Posterior vena cava (tissue), 2 donors: ENCODE measurements at regions of chr3 and their contacts with region 1.

Region 1: DNA sequence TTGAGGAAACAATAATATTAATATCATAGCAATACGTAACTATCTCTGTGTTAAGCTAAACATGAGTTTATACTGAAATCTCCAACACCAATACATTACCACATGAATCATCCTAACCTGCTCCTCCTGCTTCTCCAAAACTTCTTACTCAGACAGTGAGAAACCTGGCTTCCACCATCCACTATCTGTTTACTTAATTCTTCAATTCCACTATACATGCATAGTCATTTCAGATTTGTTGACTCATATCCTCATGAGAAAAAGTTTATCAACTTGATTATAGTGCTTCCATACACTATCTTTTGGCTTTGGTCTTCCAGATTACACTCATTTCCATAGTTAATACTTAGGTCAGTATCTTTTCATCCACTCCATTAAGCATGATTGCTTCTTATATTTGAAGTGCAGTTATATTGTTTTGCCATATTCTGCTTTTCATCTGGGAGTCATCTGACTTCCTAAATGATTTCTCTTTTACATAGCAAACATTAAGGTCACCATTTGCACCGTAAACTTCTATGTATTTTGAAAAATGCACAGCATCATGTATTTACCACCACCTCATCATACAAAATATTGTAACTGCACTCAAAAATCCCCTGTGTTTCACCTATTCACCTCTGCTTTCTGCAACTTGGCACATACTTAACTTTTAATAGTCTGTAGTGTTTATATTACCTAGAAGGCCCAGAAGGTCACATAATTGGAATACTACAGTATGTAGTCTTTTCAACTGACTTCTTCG is 970.6 kb downstream of the DIPK2A start:
- DNase-seq: no peak

Region 2: DNA sequence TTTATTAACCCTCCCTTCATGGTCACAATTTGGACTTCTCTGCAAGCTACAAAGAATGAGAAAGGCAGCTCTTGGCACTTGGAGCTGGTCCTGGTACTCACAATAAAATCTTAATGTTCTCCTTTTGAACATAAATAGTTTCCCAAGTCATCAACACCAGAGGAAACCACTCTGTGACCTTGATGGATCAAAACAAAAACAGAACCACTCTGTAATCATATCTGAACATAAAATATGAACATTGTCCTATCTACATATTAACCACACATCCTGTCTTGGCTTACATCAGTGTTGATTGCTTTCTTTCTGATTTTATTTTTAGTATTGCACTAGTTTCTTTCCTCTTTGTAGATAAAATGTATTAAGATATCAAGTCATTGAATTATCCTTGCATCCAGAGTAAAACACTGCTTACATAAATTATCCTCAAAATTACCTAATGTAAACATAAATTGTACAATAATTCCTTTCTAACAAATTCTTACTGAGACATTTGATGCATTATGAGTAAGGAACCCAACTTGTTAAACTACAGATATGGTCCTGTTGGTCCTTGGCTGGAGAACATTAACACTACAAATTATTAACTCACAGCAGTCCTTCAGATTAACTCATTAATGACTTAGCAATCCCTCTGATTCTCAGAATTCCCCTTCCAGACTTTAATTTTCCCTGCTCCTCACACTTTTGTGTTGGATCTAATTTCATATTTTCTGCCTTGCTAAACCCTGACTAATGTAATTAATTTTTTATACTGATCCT is 110.1 kb before region 1 on chr3:
- intact Hi-C with region 1: no loop called
- DNase-seq: no peak

Region 3: GRCh38 chr3:144900366-144900765 is 41.9 kb before region 1 on chr3:
- intact Hi-C with region 1: no loop called
- DNase-seq: no peak

Region 4: GRCh38 chr3:145070795-145071194 is 128.5 kb after region 1 on chr3:
- intact Hi-C with region 1: no loop called
- DNase-seq: no peak

Region 5: GRCh38 chr3:145272684-145273083 is 330.4 kb after region 1 on chr3:
- intact Hi-C with region 1: loop called in 1 of 2 experiments (anchors 10 kb)
- DNase-seq: no peak